Heart left ventricle (tissue), 16 donors: ENCODE measurements at regions of chr22 and their contacts with region 1.

Region 1: DNA sequence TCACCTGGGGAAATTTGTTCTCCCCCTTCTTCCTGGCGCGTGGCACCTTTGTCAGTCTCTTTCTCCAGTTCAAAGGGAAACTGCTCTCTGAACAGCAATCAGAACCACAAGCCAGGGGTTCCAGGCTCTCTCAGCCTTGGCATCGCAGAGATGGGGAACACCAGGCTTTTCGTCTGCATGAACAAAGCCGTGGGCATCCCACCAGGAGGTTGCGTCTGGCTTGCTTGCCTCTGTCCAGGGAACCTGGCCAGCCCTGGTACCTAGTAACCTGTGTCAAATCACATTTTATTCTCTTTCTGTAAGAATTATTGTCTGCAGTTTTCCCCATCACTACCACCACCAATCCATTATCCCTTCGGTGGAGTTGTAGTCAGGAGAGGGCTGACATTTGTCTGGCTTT is 107.0 kb downstream of the WNT7B start:
- DNase-seq: no peak
- ATAC-seq: no peak
- H3K4me3 ChIP-seq: no peak overlapping the region
- H3K27ac ChIP-seq: no peak overlapping the region
- H3K4me1 ChIP-seq: peaks cover 4 to 18% (median 13%) of the 10 kb centered on the region in 12 donors
- H3K27me3 ChIP-seq: peaks cover 15 to 52% (median 27%) of the 10 kb centered on the region in 9 donors
- CTCF ChIP-seq: no peak
- POLR2A ChIP-seq: no peak

Region 2: DNA sequence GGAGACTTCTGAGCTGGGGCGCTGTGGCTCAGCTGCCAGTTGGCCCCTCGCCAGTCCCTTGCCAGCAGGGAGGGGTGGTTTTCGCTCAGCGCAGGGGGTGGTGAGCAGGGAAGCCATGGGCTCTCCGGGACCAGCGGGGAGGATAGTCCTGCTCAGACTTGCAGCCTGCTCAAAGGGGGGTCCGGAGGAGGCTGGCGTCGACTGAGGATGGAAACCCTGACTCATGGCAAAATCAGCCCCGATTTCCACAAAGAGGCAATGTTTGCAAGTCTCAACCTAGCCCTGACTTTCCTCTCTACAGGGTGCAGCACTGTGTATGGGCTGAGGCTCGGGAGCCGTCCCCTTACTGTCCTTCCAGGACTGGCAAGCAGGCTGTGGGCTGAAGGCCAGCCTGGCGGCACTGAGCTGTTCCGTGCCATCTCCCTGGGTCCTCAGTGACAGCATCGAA is 332.3 kb before region 1 on chr22:
- intact Hi-C with region 1: no loop called
- DNase-seq: peak in 3 of 5 donors; percentile 60 to 74 (median 62)
- ATAC-seq: peak; percentile 64 to 83 (median 76)
- H3K4me3 ChIP-seq: no peak overlapping the region
- H3K27ac ChIP-seq: peak overlapping the region in 10 of 12 donors; percentile 3 to 69 (median 26)
- H3K4me1 ChIP-seq: peaks cover 0 to 21% (median 14%) of the 10 kb centered on the region in 12 donors
- H3K27me3 ChIP-seq: no peaks in the 10 kb centered on the region
- CTCF ChIP-seq: no peak
- POLR2A ChIP-seq: no peak

Region 3: GRCh38 chr22:45911601-45912271 is 41.7 kb after region 1 on chr22:
- intact Hi-C with region 1: loop called in 1 of 10 experiments (anchors 5 kb)
- DNase-seq: peak in 4 of 5 donors; percentile 55 to 83 (median 70)
- ATAC-seq: peak; percentile 57 to 88 (median 75)
- H3K4me3 ChIP-seq: no peak overlapping the region
- H3K27ac ChIP-seq: no peak overlapping the region
- H3K4me1 ChIP-seq: peaks cover 0 to 18% (median 2%) of the 10 kb centered on the region in 12 donors
- H3K27me3 ChIP-seq: peaks cover 0 to 3% (median 0%) of the 10 kb centered on the region in 9 donors
- CTCF ChIP-seq: no peak
- POLR2A ChIP-seq: no peak